Activated CD4-positive, alpha-beta T cell treated with anti-CD3 and anti-CD28 coated beads for 36 hours (primary cell): ENCODE measurements at regions of chrX and their contacts with region 1.

Region 1: DNA sequence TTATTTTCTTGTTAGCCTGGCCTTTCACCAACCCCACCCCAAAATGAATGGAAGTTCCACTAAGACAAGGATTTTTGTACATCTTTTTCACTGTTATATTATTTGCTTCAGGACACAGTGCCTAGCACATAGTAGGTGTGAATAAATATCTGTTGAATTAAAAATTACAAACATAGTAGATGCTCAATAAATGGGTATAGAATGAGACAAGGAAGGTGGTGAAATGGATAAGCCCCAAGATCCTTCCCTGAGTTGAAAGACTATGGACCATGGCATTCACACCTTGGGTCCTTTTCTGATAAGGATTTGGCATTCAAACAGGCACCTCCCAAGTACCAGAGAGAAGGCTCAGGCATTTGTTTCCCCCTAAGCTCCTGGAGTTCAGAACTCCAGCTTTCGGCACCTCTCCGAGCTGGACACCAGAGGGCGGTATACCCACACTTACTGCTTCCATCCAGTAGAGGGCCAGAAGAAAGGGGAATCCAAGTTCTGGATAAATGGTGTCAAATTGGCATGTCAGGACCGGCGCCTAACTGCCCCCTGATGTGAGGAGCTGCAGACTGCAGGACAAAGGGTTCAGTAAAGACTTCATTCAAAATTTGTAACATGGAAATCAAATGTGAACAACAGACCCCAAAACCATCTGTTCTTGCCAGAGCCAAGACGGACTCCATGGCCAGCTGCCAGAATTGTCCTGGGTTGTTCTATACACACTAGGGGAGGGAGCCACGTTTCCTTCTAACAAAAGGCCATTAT is 193.0 kb downstream of the GPC3 start:
- DNase-seq: peak; percentile 68
- ATAC-seq: peak; percentile 49
- H3K4me3 Mint-ChIP-seq: no peak overlapping the region
- H3K27ac Mint-ChIP-seq: no peak overlapping the region
- H3K4me1 Mint-ChIP-seq: no peaks in the 10 kb centered on the region
- H3K27me3 Mint-ChIP-seq: no peaks in the 10 kb centered on the region

Region 2: DNA sequence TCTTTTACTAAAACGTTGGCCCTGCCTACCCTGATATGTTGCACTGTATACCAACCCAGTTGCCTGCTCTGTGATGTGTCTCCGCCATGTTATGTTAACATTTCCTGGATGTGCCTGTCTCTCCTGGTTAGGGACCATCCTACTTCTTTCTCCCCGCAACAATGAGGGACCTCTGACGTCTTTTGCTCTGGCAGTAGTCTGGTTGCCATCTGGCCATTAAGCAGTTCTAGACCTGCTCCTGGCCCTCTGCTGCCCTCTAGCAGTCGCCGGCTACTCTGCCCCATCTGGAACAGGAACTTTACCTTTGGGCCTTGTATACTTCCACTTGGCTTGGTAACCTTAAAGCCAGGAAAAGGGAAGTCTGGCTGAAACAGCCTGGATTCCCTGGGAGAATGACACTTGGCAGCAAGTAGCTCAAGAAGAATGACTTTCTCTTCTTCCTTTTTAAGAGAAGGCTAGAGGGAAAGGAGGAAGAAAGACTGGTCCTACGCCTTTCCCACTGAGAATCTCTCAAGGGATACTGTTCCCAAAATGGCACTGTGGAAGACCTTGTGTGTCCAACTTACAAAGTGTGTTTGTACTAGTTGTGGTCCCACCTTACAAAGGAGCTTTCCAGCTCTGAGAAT is 129.5 kb after region 1 on chrX:
- CTCF ChIA-PET with region 1: interaction called, 8 read pairs
- POLR2A ChIA-PET with region 1: no interaction called
- intact Hi-C with region 1: loop called in 1 of 2 experiments (anchors 1 kb)
- DNase-seq: peak; percentile 62
- ATAC-seq: peak; percentile 56
- H3K4me3 Mint-ChIP-seq: no peak overlapping the region
- H3K27ac Mint-ChIP-seq: no peak overlapping the region
- H3K4me1 Mint-ChIP-seq: peaks cover 18% of the 10 kb centered on the region
- H3K27me3 Mint-ChIP-seq: no peaks in the 10 kb centered on the region

Region 3: DNA sequence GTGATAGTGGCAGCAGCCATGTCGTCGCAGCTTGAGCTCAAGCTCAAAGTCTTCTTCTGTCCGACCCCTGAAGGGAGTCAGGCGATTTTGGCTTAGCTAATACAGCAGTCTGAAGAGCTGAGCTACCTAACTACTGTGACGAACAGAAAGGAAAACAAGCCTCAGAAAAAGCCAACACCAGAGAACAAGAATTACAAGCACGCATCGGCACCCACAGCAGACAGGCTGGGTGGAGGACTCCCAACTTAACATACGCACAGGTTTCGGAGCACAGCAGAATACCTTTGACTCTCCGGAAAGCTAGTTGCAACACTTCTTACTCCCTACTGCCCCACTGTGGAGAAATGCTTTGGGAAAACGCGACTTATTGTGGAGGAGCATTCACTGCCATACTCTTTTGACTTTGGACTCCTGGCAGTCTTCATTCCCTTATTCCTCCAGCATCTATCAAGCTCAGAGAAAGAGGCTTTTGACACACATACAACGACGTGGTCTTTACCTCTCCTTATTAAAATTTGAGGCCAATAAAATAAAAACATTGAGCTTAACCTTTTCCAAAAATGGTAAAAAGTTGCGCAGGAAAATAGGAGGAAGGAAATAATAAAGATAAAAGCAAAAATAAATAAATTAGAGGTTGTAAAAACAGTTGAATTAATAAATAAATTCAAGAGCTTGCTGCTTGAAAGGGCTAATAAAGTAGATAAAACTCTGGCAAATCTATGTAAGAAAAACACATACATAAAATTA is 234.4 kb after region 1 on chrX:
- CTCF ChIA-PET with region 1: interaction called, 76 read pairs
- POLR2A ChIA-PET with region 1: no interaction called
- intact Hi-C with region 1: loop called (anchors 1 kb)
- DNase-seq: peak; percentile 57
- ATAC-seq: peak; percentile 66
- H3K4me3 Mint-ChIP-seq: no peak overlapping the region
- H3K27ac Mint-ChIP-seq: no peak overlapping the region
- H3K4me1 Mint-ChIP-seq: peaks cover 5% of the 10 kb centered on the region
- H3K27me3 Mint-ChIP-seq: peaks cover 2% of the 10 kb centered on the region

Region 4: GRCh38 chrX:134251241-134251640 is 458.9 kb after region 1 on chrX:
- CTCF ChIA-PET with region 1: interaction called, 3 read pairs
- POLR2A ChIA-PET with region 1: no interaction called
- intact Hi-C with region 1: loop called (anchors 2 to 5 kb)
- DNase-seq: no peak
- ATAC-seq: no peak
- H3K4me3 Mint-ChIP-seq: no peak overlapping the region
- H3K27ac Mint-ChIP-seq: no peak overlapping the region
- H3K4me1 Mint-ChIP-seq: no peaks in the 10 kb centered on the region
- H3K27me3 Mint-ChIP-seq: no peaks in the 10 kb centered on the region